ENCODE measurements at regions of chr19 and their contacts with region 1.

Region 1: GRCh38 chr19:10532457-10532856 is 11.2 kb upstream of the ATG4D start:
- DNase-seq: no peak
- ATAC-seq: no peak
- H3K4me3 ChIP-seq: no peak overlapping the region
- H3K4me3 Mint-ChIP-seq: no peak overlapping the region
- H3K27ac ChIP-seq: no peak overlapping the region
- H3K27ac Mint-ChIP-seq: no peak overlapping the region
- H3K4me1 ChIP-seq: no peaks in the 10 kb centered on the region
- H3K4me1 Mint-ChIP-seq: no peaks in the 10 kb centered on the region
- H3K27me3 ChIP-seq: peaks cover 0 to 13% of the 10 kb centered on the region in 2 experiments
- H3K27me3 Mint-ChIP-seq: peaks cover 4 to 12% of the 10 kb centered on the region in 2 donors

Region 2: GRCh38 chr19:10549733-10550132 is 17.3 kb after region 1 on chr19:
- CTCF ChIA-PET with region 1: interaction called in 1 of 2 experiments, 11 read pairs
- POLR2A ChIA-PET with region 1: interaction called in 1 of 2 experiments, 3 read pairs
- DNase-seq: no peak
- ATAC-seq: no peak
- H3K4me3 ChIP-seq: no peak overlapping the region
- H3K4me3 Mint-ChIP-seq: no peak overlapping the region
- H3K27ac ChIP-seq: no peak overlapping the region
- H3K27ac Mint-ChIP-seq: no peak overlapping the region
- H3K4me1 ChIP-seq: peaks cover 24 to 70% of the 10 kb centered on the region in 2 experiments
- H3K4me1 Mint-ChIP-seq: peaks cover 38 to 47% (median 42%) of the 10 kb centered on the region in 3 donors
- H3K27me3 ChIP-seq: no peaks in the 10 kb centered on the region
- H3K27me3 Mint-ChIP-seq: no peaks in the 10 kb centered on the region

Measured in T-cell (primary cell).